ENCODE measurements at regions of chr6 and their contacts with region 1.

Region 1: GRCh38 chr6:26285143-26286134 is 79.6 kb upstream of the BTN3A2 start:
- DNase-seq: peak; percentile 96 to 98 (median 98)
- ATAC-seq: peak; percentile 94 to 96 (median 94)
- H3K4me3 ChIP-seq: peak overlapping the region; percentile 55 to 91 (median 72)
- H3K27ac ChIP-seq: peak overlapping the region; percentile 88 to 98 (median 97)
- H3K4me1 ChIP-seq: peaks cover 0 to 28% (median 9%) of the 10 kb centered on the region in 12 donors
- H3K27me3 ChIP-seq: no peaks in the 10 kb centered on the region
- CTCF ChIP-seq: no peak
- POLR2A ChIP-seq: peak in 1 of 2 donors; percentile 78

Region 2: GRCh38 chr6:26054857-26055669 is 230.4 kb before region 1 on chr6:
- intact Hi-C with region 1: loop called in 1 of 10 experiments (anchors 10 kb)
- DNase-seq: peak; percentile 80 to 92 (median 89)
- ATAC-seq: peak; percentile 79 to 89 (median 84)
- H3K4me3 ChIP-seq: peak overlapping the region; percentile 59 to 80 (median 74)
- H3K27ac ChIP-seq: peak overlapping the region; percentile 81 to 98 (median 95)
- H3K4me1 ChIP-seq: peaks cover 0 to 24% (median 10%) of the 10 kb centered on the region in 12 donors
- H3K27me3 ChIP-seq: no peaks in the 10 kb centered on the region
- CTCF ChIP-seq: peak in 2 of 12 donors; percentile 5 to 22
- POLR2A ChIP-seq: no peak

Region 3: GRCh38 chr6:26122793-26123674 is 162.4 kb before region 1 on chr6:
- intact Hi-C with region 1: loop called in 3 of 10 experiments (anchors 5 to 10 kb)
- DNase-seq: peak; percentile 89 to 99 (median 98)
- ATAC-seq: peak; percentile 87 to 90 (median 88)
- H3K4me3 ChIP-seq: peak overlapping the region; percentile 73 to 97 (median 82)
- H3K27ac ChIP-seq: peak overlapping the region; percentile 95 to 99 (median 98)
- H3K4me1 ChIP-seq: peaks cover 0 to 25% (median 17%) of the 10 kb centered on the region in 12 donors
- H3K27me3 ChIP-seq: no peaks in the 10 kb centered on the region
- CTCF ChIP-seq: peak in 1 of 12 donors; percentile 7
- POLR2A ChIP-seq: peak; percentile 54 to 58

Region 4: DNA sequence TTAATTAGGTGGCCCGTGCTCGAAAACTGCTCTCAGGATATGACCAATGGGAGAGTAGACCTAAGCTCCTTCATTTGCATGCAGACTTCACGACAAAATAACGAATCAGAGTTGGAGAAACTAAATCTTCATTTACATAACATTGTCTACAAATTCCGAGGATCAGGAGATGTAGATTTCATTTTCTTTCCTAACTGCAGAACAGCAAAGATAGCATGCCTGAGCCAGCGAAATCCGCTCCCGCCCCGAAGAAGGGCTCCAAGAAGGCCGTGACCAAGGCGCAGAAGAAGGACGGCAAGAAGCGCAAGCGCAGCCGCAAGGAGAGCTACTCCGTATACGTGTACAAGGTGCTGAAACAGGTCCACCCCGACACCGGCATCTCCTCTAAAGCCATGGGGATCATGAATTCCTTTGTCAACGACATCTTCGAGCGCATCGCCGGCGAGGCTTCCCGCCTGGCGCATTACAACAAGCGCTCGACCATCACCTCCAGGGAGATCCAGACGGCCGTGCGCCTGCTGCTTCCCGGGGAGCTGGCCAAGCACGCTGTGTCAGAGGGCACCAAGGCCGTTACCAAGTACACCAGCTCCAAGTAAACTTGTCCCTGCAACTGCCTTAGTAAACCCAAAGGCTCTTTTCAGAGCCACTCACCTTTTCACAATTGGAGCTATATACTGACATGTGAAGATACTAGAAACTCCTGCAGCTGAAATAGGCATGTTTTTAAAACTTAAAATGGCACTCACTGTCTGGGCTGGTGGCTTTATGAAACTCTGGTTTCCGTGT is 101.7 kb before region 1 on chr6:
- intact Hi-C with region 1: loop called in 1 of 10 experiments (anchors 10 kb)
- DNase-seq: peak; percentile 41 to 71 (median 65)
- ATAC-seq: peak; percentile 91 to 95 (median 95)
- H3K4me3 ChIP-seq: peak overlapping the region; percentile 25 to 71 (median 56)
- H3K27ac ChIP-seq: peak overlapping the region in 11 of 12 donors; percentile 66 to 89 (median 80)
- H3K4me1 ChIP-seq: peaks cover 0 to 30% (median 10%) of the 10 kb centered on the region in 12 donors
- H3K27me3 ChIP-seq: no peaks in the 10 kb centered on the region
- CTCF ChIP-seq: no peak
- POLR2A ChIP-seq: peak in 1 of 2 donors; percentile 96

Region 5: DNA sequence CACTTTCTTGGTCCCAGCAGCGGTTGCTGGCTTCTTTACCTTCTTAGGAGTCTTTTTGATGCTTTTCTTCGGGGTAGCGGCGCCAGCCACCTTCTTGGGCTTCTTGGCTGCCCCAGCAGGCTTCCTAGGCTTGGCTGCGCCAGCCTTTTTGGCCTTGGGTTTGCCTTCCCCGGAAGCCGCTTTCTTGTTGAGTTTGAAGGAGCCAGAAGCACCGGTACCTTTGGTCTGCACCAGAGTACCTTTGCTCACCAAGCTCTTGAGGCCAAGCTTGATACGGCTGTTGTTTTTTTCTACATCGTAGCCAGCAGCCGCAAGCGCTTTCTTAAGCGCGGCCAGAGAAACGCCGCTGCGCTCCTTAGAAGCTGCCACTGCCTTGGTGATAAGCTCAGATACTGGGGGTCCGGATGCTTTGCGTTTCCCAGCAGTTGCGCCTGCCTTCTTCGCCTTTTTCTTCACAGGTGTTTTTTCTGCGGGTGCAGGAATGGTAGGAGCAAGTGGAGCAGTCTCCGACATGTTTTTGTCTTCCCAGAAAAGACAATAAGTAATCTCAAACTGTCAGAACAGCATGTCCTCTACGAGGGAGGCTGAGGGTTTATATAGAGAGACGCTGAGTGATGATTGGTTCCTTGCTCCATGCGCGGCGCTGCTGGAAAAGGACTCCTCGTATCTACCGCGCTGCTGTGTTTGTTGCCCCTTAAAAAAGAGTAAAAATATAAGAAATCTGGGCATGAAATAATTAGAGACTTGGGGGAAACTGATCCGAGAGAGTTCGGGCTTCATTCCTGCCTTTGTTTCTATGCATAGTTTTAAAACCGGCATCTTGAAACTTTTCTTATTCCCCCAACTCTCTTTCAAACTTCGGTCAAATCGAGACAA is 50.8 kb before region 1 on chr6:
- intact Hi-C with region 1: loop called in 3 of 10 experiments (anchors 5 to 10 kb)
- DNase-seq: peak in 4 of 5 donors; percentile 42 to 70 (median 46)
- ATAC-seq: peak; percentile 79 to 89 (median 88)
- H3K4me3 ChIP-seq: peak overlapping the region; percentile 19 to 72 (median 51)
- H3K27ac ChIP-seq: peak overlapping the region in 11 of 12 donors; percentile 26 to 95 (median 58)
- H3K4me1 ChIP-seq: peaks cover 0 to 31% (median 8%) of the 10 kb centered on the region in 12 donors
- H3K27me3 ChIP-seq: peaks cover 0 to 85% (median 27%) of the 10 kb centered on the region in 9 donors
- CTCF ChIP-seq: no peak
- POLR2A ChIP-seq: peak in 1 of 2 donors; percentile 50

Region 6: DNA sequence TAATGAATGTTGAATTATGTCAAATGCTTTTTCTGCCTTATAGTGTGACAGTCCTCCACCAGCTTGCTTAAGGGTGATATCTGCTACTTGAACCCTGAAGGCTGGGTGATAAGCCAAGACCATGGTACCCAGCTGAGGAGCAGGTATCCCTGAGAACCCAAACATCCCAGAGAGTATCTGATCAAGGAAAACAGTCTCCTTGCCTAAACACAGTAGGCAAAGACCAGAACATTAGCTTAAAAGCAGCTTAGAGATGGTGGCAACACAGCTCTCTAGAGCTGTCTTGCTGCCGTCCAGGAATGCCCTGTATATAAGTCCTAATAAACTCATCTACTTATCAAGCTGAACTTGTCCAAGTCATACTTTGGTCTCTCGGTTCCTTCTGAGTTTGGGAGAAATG is 834.3 kb after region 1 on chr6:
- intact Hi-C with region 1: loop called in 1 of 10 experiments (anchors 5 kb)
- DNase-seq: no peak
- ATAC-seq: no peak
- H3K4me3 ChIP-seq: no peak overlapping the region
- H3K27ac ChIP-seq: no peak overlapping the region
- H3K4me1 ChIP-seq: no peaks in the 10 kb centered on the region
- H3K27me3 ChIP-seq: no peaks in the 10 kb centered on the region
- CTCF ChIP-seq: no peak
- POLR2A ChIP-seq: no peak

Region 7: GRCh38 chr6:27472617-27473400 is 1187.4 kb after region 1 on chr6 and contains the start of gene ZNF184:
- intact Hi-C with region 1: loop called in 1 of 10 experiments (anchors 10 kb)
- DNase-seq: peak; percentile 95 to 96 (median 96)
- ATAC-seq: peak; percentile 99 to 100 (median 100)
- H3K4me3 ChIP-seq: peak within 1 kb of the TSS; percentile 52 to 99 (median 86)
- H3K27ac ChIP-seq: peak within 1 kb of the TSS; percentile 34 to 92 (median 86)
- H3K4me1 ChIP-seq: peaks cover 0 to 37% (median 19%) of the 10 kb centered on the region in 12 donors
- H3K27me3 ChIP-seq: no peaks in the 10 kb centered on the region
- CTCF ChIP-seq: peak in 3 of 12 donors; percentile 2 to 29 (median 24)
- POLR2A ChIP-seq: peak in 1 of 2 donors; percentile 78
- total RNA-seq, gene ZNF184: 3.2 to 6.5 (median 4.0) TPM